Head of caudate nucleus (tissue), 42 donors: ENCODE measurements at regions of chr20 and their contacts with region 1.

Region 1: GRCh38 chr20:21571841-21572690 is 58.2 kb upstream of the NKX2-2 start:
- DNase-seq: peak in 31 of 42 donors; percentile 4 to 81 (median 39)

Region 2: GRCh38 chr20:21526776-21527175 is 45.3 kb before region 1 on chr20:
- intact Hi-C with region 1: loop called (anchors 2 kb)
- DNase-seq: peak in 1 of 42 donors; percentile 5